GM10248 (cell line): ENCODE measurements at regions of chr11 and their contacts with region 1.

Region 1: DNA sequence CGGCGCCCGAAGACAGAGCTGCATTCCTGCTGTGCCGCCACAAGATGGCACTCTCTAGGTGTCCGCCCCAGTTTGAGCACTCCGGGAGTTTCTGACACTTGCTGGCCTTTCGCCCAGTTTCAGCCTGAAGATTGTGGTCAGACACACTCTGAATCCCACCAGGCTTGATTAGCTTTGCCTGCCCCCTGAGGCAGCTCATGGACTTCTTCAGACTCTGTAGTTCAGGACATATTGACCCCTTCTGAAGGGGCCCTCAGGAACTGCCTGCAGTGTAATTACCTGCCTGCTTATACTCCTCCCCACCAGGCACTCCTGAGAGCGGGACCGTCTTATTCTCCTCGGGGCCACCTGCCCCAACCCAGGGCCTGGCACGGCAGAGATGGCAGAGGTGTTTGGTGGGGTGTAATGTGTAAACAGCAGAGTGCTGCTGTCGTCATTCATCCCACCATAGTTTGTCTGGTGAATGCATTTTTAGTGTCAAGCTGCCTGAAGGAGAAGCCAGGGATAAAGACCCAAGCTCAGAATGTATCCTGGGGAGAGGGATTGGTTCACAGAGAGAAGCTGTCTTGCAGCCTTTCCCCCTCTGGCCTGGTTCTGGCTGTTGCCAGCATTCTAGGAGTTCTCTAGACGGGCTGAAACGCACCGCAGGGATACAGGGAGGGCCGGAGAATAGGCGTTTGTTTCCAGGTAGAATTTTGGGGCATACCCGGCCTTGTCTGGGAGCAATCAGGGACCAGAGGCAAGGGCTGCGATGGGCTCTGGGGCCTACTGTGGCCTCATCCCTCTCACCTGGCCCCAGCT is 46.4 kb downstream of the EIF3F start:
- DNase-seq: peak; percentile 87
- CTCF ChIP-seq: peak; percentile 85

Region 2: DNA sequence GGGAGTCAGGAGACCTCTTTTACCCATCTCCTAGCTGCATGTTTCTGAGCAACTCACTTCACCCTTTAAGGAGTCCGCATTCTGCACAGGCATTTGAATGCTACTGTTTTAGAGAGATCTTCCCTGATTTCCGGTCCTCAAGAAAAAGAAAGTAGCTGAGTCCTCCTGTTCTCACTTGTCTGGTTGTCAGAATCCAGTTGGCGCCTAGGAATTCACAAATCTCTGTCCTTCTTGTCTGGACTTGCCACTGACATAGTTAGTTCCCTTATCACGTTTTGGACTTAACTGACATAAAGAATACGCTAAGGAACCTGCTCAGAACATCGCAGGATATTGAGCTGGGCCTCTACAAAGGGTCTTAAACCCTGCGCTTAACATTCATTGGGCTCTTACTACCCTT is 175.5 kb before region 1 on chr11:
- CTCF ChIA-PET with region 1: no interaction called
- POLR2A ChIA-PET with region 1: no interaction called
- DNase-seq: no peak
- CTCF ChIP-seq: no peak

Region 3: DNA sequence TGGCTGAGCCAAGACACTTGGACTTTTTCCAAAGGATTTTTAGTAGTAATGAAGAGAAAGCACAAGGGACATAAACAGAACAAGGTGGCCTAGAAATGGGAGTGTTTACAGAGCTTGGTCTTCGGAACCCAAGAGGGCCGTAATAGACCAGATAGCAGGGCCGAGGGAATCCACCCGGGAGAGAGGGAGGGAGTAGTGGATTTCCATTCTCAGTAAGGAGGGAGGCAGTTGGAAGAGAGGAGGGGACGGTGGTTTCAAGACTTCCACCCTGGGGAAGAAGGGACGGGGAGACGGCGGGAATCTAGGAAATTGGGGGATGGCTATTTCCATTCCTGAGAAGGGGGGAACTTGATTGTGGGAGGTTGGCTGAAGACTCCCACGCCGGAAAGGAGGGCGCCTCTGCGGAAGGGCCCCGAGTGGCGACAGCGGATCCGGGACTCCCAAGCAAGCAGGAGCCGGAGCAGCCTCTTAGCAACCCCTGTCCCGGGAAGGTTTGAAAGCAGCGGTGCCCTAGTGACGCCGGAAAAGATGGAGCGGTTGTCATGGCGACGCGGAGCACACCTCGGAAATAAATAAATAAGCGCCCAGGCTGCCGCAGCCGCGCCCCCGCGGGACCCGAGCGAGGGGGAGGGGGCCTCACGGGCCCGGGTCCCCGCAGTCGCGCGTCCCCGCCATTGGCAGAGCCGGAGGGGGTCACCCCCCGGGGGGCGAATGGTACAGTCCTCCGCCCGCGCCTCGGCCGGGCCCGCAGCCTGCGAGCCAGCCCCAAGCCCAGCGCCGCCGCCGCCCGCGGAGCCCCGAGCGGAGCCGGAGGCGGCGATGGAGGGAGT is 14.8 kb before region 1 on chr11:
- CTCF ChIA-PET with region 1: interaction called, 31 read pairs
- POLR2A ChIA-PET with region 1: no interaction called
- DNase-seq: peak; percentile 54
- CTCF ChIP-seq: no peak

Region 4: DNA sequence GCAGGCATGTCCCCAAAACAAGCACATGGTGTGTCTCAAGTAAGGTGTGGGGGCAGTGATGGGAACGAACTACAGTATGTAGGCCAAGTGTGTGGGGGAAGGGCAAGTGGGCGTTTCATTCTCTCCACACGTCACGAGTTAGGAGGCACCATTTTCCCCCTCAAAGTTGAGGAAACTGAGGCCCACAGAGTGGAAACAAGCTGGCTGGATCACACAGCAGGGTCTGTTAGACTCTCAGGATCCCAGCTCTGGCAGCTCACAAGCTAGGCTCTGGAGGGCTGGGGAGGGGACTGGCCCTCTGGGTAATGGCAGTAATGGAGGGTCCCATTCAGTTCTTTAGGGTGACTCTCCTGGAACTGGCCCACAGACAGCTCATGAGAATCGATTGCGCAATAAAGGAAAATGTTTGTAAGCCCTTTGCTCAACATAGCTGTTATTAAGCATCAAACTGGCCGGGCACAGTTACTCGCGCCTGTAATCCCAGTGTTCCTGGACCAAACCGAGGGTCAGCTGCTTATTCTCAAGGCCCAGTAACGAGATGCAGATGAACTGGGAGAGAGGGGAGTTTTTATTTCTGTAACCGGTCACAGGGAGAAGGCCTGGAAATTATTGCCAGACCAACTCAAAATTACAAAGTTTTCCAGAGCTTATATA is 23.4 kb after region 1 on chr11:
- CTCF ChIA-PET with region 1: interaction called, 19 read pairs
- POLR2A ChIA-PET with region 1: no interaction called
- DNase-seq: no peak
- CTCF ChIP-seq: no peak

Region 5: GRCh38 chr11:8087185-8087584 is 53.7 kb after region 1 on chr11:
- CTCF ChIA-PET with region 1: interaction called, 25 read pairs
- POLR2A ChIA-PET with region 1: no interaction called
- DNase-seq: no peak
- CTCF ChIP-seq: no peak

Region 6: DNA sequence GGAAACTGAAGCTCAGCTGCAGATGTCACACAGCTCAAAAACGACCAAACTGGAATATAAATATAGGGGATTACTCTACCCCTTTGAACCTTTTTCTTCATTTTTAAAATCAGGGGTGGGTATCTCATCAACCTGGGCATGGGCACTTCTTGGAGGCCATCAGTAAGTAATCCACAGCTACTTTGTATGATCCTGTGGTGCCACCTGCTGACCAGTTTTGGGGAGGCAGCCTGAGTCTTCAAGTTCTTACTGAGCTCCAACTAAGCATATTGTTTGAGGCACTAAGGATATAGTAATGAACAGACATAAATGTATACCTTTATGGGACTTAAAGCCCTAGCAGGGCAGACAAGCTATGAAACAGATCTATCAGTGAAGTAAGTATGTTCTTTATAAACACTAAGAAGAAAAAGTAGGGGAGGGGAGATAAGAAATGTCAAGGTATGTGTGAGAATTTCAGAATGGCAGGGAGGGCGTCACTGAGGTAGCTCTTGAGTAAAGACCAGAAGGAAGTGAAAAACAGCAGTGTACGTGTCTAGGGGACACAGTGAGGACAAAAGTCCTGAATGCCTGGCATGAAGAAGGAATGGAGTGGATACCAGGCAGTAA is 65.9 kb after region 1 on chr11:
- CTCF ChIA-PET with region 1: interaction called, 275 read pairs
- POLR2A ChIA-PET with region 1: no interaction called
- DNase-seq: peak; percentile 66
- CTCF ChIP-seq: peak; percentile 87